H1 (cell line): ENCODE measurements at regions of chr22 and their contacts with region 1.

Region 1: DNA sequence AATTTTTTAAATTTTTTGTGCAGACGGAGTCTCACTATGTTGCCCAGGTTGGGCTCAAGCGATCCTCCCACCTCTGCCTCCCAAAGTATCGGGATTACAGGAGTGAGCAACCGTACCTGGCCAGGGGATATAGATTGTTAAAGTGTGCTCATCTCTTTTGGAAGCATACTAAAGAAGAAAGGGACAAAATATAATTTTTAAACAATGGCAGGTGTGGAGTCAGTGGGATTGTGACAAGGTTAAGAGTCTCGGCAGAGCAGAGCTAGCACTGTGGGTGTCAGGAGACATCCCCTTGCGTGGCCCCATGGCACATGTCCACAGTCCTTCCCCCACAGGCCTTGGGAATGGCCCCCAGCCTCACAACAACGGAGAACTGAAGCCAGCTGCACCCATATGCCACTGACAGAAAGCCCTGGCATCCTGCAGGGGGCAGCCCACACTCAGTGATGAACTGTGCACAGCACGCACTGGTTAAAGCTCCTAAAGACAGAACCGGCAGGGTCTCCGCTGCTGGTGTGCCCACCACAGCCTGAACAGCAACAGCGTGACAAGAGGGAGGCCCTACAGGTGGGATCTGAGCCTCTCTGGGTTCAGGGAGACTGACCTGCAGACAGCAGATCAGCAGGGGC is 29.9 kb downstream of the SERPIND1 start:
- DNase-seq: peak; percentile 29 to 71
- H3K4me3 ChIP-seq: no peak overlapping the region
- H3K27ac ChIP-seq: no peak overlapping the region
- H3K4me1 ChIP-seq: no peaks in the 10 kb centered on the region; a peak in 1 of 7 replicates
- H3K27me3 ChIP-seq: no peaks in the 10 kb centered on the region
- CTCF ChIP-seq: peak; percentile 79 to 89 (median 80)
- EP300 ChIP-seq: no peak
- POLR2A ChIP-seq: no peak
- RAD21 ChIP-seq: peak; percentile 86 to 92

Region 2: GRCh38 chr22:20738394-20739089 is 65.3 kb before region 1 on chr22:
- CTCF ChIA-PET with region 1: no interaction called
- POLR2A ChIA-PET with region 1: no interaction called
- DNase-seq: no peak
- H3K4me3 ChIP-seq: no peak overlapping the region
- H3K27ac ChIP-seq: no peak overlapping the region
- H3K4me1 ChIP-seq: no peaks in the 10 kb centered on the region
- H3K27me3 ChIP-seq: no peaks in the 10 kb centered on the region
- CTCF ChIP-seq: no peak
- EP300 ChIP-seq: no peak
- POLR2A ChIP-seq: no peak
- RAD21 ChIP-seq: no peak

Region 3: DNA sequence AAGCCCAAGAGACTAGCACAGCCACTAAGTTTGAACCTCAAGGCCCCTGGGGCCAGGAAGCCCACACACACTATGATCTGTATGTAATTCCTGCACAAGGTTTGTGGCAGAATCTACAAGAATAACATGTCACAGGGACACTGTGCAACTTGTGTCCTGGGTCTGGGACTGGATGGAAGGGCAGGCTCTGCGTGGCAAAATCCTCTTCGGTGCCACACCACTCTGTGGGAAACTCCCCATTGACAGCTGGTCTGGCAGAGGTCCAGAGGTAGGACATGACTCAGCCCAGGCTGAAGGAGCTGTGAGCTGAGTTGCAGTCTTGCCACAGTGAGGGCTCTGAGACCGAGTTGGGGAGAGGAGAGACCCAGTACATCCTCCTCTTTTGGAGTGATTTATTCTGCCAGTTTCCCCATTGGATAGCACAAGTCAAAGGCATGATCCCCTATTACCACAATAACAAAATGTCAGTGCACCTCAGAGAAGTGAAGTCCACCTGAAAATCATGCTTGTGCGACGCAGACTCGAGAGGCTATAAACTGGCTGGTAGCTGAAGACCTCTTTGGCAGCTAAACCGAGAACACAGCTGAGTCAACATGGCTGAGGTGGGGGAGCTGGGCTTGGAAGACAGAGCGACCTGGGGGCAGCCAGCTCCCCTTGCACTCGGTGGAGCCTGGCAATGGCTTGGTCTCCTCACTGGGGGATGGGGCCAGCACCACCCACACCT is 53.2 kb before region 1 on chr22:
- CTCF ChIA-PET with region 1: no interaction called
- POLR2A ChIA-PET with region 1: no interaction called
- DNase-seq: no peak
- H3K4me3 ChIP-seq: no peak overlapping the region
- H3K27ac ChIP-seq: no peak overlapping the region
- H3K4me1 ChIP-seq: no peaks in the 10 kb centered on the region
- H3K27me3 ChIP-seq: no peaks in the 10 kb centered on the region
- CTCF ChIP-seq: no peak
- EP300 ChIP-seq: no peak
- POLR2A ChIP-seq: no peak
- RAD21 ChIP-seq: no peak

Region 4: DNA sequence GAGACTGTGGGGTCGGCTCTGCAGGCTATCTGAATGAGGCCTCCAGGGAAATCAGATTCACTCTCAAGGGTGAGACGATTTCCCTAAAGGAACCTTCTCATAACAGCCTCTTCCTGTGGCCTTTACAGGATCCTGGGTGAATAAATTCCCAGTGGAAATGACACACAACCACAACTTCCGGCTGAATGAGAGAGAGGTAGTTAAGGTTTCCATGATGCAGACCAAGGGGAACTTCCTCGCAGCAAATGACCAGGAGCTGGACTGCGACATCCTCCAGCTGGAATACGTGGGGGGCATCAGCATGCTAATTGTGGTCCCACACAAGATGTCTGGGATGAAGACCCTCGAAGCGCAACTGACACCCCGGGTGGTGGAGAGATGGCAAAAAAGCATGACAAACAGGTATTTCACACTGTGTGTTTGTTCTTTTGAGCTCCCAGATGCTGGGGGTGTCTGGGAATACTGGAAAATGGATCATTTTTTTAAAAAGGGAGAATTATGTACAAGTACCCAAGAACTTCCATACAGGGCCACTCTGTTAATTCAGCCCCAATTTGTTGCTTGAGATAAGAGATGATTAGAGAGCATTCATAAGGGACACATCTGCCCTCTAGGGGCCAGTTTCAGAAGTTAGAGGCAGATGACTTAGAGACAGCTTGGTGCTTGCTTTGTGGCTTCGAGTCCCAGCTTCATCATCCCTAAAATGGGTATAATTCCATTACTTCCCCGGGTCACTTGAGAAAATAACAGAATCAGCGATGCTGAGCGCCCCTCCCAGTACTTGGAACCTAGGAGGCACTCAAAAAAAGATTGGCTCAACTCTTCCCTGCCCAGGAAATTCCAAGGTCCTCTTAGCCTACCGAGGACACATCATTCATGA is 19.7 kb before region 1 on chr22:
- CTCF ChIA-PET with region 1: interaction called, 15 read pairs
- POLR2A ChIA-PET with region 1: no interaction called
- DNase-seq: peak in 1 of 2 experiments; percentile 56
- H3K4me3 ChIP-seq: no peak overlapping the region
- H3K27ac ChIP-seq: no peak overlapping the region
- H3K4me1 ChIP-seq: peaks cover 5 to 11% (median 6%) of the 10 kb centered on the region in 4 experiments; a peak in 5 of 7 replicates
- H3K27me3 ChIP-seq: no peaks in the 10 kb centered on the region
- CTCF ChIP-seq: peak; percentile 8 to 81 (median 73)
- EP300 ChIP-seq: no peak
- POLR2A ChIP-seq: no peak
- RAD21 ChIP-seq: peak; percentile 55 to 71

Region 5: DNA sequence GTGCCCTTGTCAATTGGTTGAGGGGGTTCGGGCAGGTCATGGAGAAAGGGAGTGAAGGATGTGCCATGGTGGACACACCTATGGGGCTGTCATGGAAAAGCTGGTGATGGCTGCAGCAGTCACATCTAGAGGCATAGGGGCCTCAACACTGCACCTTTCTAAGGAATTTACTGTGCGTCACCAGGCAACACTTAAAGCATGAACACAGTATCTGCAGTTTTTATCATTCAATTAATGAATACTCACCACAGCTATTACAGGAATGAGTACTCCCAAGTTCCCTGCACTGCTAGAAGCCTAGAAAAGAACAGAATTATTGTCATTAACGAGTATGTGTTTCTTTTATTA is 10.9 kb before region 1 on chr22:
- CTCF ChIA-PET with region 1: interaction called, 15 read pairs
- POLR2A ChIA-PET with region 1: no interaction called
- DNase-seq: no peak
- H3K4me3 ChIP-seq: no peak overlapping the region
- H3K27ac ChIP-seq: no peak overlapping the region
- H3K4me1 ChIP-seq: no peaks in the 10 kb centered on the region
- H3K27me3 ChIP-seq: no peaks in the 10 kb centered on the region
- CTCF ChIP-seq: no peak
- EP300 ChIP-seq: no peak
- POLR2A ChIP-seq: no peak
- RAD21 ChIP-seq: no peak

Region 6: GRCh38 chr22:20816559-20816958 is 12.7 kb after region 1 on chr22:
- CTCF ChIA-PET with region 1: interaction called, 17 read pairs
- POLR2A ChIA-PET with region 1: no interaction called
- DNase-seq: no peak
- H3K4me3 ChIP-seq: no peak overlapping the region
- H3K27ac ChIP-seq: no peak overlapping the region
- H3K4me1 ChIP-seq: no peaks in the 10 kb centered on the region
- H3K27me3 ChIP-seq: no peaks in the 10 kb centered on the region
- CTCF ChIP-seq: no peak
- EP300 ChIP-seq: no peak
- POLR2A ChIP-seq: no peak
- RAD21 ChIP-seq: no peak

Region 7: GRCh38 chr22:20847318-20847822 is 43.6 kb after region 1 on chr22:
- CTCF ChIA-PET with region 1: no interaction called
- POLR2A ChIA-PET with region 1: no interaction called
- DNase-seq: no peak
- H3K4me3 ChIP-seq: no peak overlapping the region
- H3K27ac ChIP-seq: no peak overlapping the region
- H3K4me1 ChIP-seq: peaks cover 0 to 3% (median 0%) of the 10 kb centered on the region in 4 experiments; a peak in 2 of 7 replicates
- H3K27me3 ChIP-seq: no peaks in the 10 kb centered on the region
- CTCF ChIP-seq: no peak
- EP300 ChIP-seq: no peak
- POLR2A ChIP-seq: no peak
- RAD21 ChIP-seq: no peak

Region 8: GRCh38 chr22:20857838-20858614 is 54.2 kb after region 1 on chr22:
- CTCF ChIA-PET with region 1: interaction called, 14 read pairs
- POLR2A ChIA-PET with region 1: no interaction called
- DNase-seq: peak; percentile 72 to 91
- H3K4me3 ChIP-seq: peak overlapping the region; percentile 75 to 85 (median 78)
- H3K27ac ChIP-seq: 0 out of 2 replicates have a peak overlapping the region, but pooled peaks have one; percentile 2
- H3K4me1 ChIP-seq: peaks cover 3 to 8% (median 6%) of the 10 kb centered on the region in 4 experiments; a peak in 5 of 7 replicates
- H3K27me3 ChIP-seq: no peaks in the 10 kb centered on the region
- CTCF ChIP-seq: no peak
- EP300 ChIP-seq: peak in 1 of 2 experiments; percentile 42; a peak in 1 of 3 replicates
- POLR2A ChIP-seq: no peak
- RAD21 ChIP-seq: no peak

Region 9: DNA sequence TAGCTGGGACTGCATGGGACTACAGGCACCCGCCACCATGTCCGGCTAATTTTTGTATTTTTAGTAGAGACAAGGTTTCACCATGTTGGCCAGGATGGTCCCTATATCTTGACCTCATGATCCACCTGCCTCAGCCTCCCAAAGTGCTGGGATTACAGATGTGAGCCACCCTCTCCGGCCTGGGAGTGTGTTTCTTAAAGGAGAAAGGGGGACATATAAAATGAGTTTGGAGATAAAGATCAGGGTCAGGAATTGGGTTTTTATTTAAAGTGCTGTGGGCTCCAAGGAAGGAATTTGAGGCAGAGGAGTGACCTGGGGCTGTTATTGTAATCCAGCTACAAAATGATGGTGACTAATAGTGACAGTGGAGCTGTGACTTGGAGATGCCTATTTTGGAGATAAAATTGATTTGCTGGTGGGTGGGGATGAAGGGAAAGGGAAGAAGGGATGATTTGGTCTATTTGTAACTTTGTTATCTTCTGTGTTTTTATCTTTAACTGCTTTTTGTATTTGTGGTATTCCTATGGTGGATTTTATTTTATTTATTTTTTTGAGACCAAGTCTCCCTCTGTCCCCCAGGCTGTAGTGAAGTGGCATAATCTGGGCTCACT is 118.4 kb after region 1 on chr22:
- CTCF ChIA-PET with region 1: no interaction called
- POLR2A ChIA-PET with region 1: no interaction called
- DNase-seq: no peak
- H3K4me3 ChIP-seq: no peak overlapping the region
- H3K27ac ChIP-seq: no peak overlapping the region
- H3K4me1 ChIP-seq: peaks cover 0 to 11% (median 7%) of the 10 kb centered on the region in 4 experiments; a peak in 6 of 7 replicates
- H3K27me3 ChIP-seq: no peaks in the 10 kb centered on the region
- CTCF ChIP-seq: no peak
- EP300 ChIP-seq: no peak
- POLR2A ChIP-seq: no peak
- RAD21 ChIP-seq: no peak

Region 10: DNA sequence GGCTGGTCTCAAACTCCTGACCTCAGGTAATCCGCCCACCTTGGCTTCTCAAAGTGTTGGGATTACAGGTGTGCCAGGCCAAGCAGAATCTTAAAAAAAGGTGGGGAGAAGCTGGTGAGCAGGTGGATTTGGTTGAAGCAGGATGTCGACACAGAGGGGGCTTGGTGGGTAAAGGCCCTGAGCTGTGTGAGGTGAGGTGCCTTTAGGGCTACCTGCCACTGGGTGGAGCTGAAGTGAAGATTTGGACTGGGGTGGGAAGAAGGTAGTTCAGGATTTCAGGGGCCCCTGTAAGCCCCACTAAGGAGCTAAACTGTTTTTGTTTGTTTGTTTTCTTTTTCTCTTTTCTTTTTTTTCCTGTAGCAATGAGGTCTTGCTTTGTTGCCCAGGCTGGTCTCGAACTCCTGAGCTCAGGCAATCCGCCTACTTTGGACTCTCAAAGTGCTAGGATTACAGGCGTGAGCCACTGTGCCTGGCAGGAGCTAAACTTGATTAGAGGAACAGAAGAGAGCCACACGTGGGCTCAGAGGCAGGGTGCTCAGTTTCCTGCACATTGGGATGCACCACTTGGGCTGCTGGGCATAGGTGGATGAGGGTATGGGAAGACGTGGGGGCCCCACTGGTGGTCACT is 217.1 kb after region 1 on chr22:
- CTCF ChIA-PET with region 1: interaction called, 15 read pairs
- POLR2A ChIA-PET with region 1: no interaction called
- DNase-seq: peak in 1 of 2 experiments; percentile 73
- H3K4me3 ChIP-seq: no peak overlapping the region
- H3K27ac ChIP-seq: no peak overlapping the region
- H3K4me1 ChIP-seq: no peaks in the 10 kb centered on the region
- H3K27me3 ChIP-seq: no peaks in the 10 kb centered on the region; a peak in 1 of 7 replicates
- CTCF ChIP-seq: peak; percentile 70 to 80 (median 74)
- EP300 ChIP-seq: no peak
- POLR2A ChIP-seq: no peak
- RAD21 ChIP-seq: peak; percentile 71 to 73